ENCODE measurements at regions of chr5 and their contacts with region 1.

Region 1: GRCh38 chr5:85972539-85972938 is 645.2 kb upstream of the COX7C start:
- DNase-seq: no peak
- H3K4me3 ChIP-seq: no peak overlapping the region
- H3K27ac ChIP-seq: no peak overlapping the region
- H3K4me1 ChIP-seq: no peaks in the 10 kb centered on the region
- H3K27me3 ChIP-seq: no peaks in the 10 kb centered on the region
- CTCF ChIP-seq: no peak
- POLR2A ChIP-seq: no peak

Region 2: DNA sequence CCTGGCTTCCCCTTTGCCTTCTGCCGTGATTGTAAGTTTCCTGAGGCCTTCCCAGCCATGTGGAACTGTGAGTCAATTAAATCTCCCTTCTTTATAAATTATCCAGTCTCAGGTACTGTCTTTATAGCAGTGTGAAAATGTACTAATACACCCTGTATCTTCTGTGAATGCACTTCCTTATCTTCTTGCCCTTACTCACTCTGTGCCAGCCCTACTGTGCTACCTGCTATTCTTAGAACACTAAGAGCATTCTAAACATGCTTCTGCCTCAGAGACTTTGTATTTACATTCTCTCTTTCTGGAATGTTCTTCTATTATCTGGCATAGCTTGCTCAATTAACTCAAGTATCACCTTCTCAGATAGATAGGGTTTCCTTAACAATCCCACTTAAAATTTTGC is 1423.5 kb before region 1 on chr5:
- intact Hi-C with region 1: loop called (anchors 5 kb)
- DNase-seq: no peak
- H3K4me3 ChIP-seq: no peak overlapping the region
- H3K27ac ChIP-seq: no peak overlapping the region
- H3K4me1 ChIP-seq: no peaks in the 10 kb centered on the region
- H3K27me3 ChIP-seq: no peaks in the 10 kb centered on the region
- CTCF ChIP-seq: no peak
- POLR2A ChIP-seq: no peak

Measured in breast epithelium (tissue), 4 donors.